GM10248 (cell line): ENCODE measurements at regions of chr15 and their contacts with region 1.

Region 1: GRCh38 chr15:45340429-45340828 is 37.9 kb downstream of the GATM start:
- DNase-seq: no peak
- CTCF ChIP-seq: no peak

Region 2: GRCh38 chr15:45291822-45292582 is 48.4 kb before region 1 on chr15:
- CTCF ChIA-PET with region 1: no interaction called
- POLR2A ChIA-PET with region 1: no interaction called
- DNase-seq: no peak
- CTCF ChIP-seq: no peak

Region 3: DNA sequence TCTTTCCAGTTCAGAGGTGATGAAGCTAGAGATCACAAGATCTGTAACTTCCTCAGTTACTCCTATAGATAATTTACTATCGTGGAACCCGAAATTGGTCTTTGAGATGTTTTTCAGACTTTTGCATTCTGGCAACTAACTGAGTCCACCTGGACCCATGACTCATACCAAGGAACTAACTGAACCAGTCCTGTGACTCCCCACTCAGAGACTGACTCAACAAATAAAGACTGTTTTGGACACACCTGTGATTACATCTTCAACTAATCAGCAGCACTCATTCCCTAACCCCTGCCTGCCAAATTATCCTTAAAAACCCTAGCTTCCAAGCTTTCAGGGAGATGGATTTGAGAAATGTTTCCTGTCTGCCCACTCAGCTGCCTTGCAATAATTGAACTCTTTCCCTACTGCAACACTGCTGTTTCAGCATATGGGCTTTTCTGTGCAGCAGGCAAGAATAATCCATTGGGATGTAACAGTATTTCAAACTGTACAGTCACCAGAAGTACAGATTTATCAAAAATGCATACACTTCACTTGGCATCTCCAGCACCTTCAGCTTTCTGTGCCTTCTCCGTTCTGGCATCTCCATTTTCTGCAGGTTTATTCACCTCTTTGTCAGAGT is 19.7 kb before region 1 on chr15:
- CTCF ChIA-PET with region 1: interaction called, 11 read pairs
- POLR2A ChIA-PET with region 1: no interaction called
- DNase-seq: no peak
- CTCF ChIP-seq: no peak

Region 4: GRCh38 chr15:45648521-45649200 is 308.2 kb after region 1 on chr15:
- CTCF ChIA-PET with region 1: no interaction called
- POLR2A ChIA-PET with region 1: no interaction called
- DNase-seq: no peak
- CTCF ChIP-seq: no peak